ENCODE measurements at regions of chrX and their contacts with region 1.

Region 1: DNA sequence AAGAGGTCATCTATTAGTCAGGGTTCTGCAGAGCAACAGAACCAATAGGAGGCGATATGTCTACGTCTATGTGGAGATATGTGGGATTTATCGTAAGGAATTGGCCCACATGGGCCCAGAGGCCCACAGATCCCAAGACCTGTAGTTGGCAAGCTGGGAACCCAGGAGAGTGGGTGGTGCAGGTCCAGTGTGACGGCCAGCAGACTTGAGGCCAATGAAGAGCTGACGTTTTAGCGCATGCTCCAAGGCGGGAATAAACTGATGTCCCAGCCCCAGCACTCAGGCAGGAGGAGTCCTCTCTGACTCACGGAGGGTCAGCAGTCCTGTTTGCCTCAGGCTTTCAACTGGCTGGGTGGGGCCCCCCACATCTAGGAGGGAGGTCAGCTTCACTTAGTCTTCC is 21.3 kb downstream of the SPACA5 start:
- DNase-seq: no peak
- H3K4me3 Mint-ChIP-seq: no peak overlapping the region
- H3K27ac Mint-ChIP-seq: no peak overlapping the region
- H3K4me1 Mint-ChIP-seq: peaks cover 6% of the 10 kb centered on the region
- H3K27me3 Mint-ChIP-seq: no peaks in the 10 kb centered on the region

Region 2: GRCh38 chrX:47743504-47743903 is 284.6 kb before region 1 on chrX:
- CTCF ChIA-PET with region 1: no interaction called
- intact Hi-C with region 1: no loop called
- DNase-seq: no peak
- H3K4me3 Mint-ChIP-seq: no peak overlapping the region
- H3K27ac Mint-ChIP-seq: no peak overlapping the region
- H3K4me1 Mint-ChIP-seq: no peaks in the 10 kb centered on the region
- H3K27me3 Mint-ChIP-seq: no peaks in the 10 kb centered on the region

Region 3: GRCh38 chrX:47958761-47959342 is 69.2 kb before region 1 on chrX:
- CTCF ChIA-PET with region 1: interaction called, 10 read pairs
- intact Hi-C with region 1: loop called (anchors 1 kb)
- DNase-seq: peak; percentile 33
- H3K4me3 Mint-ChIP-seq: no peak overlapping the region
- H3K27ac Mint-ChIP-seq: no peak overlapping the region
- H3K4me1 Mint-ChIP-seq: no peaks in the 10 kb centered on the region
- H3K27me3 Mint-ChIP-seq: no peaks in the 10 kb centered on the region

Measured in activated naive CD4-positive, alpha-beta T cell treated with anti-CD3 and anti-CD28 coated beads for 36 hours (primary cell).